A549 (cell line): ENCODE measurements at regions of chr11 and their contacts with region 1.

Region 1: GRCh38 chr11:18115360-18116127 is 9.7 kb upstream of the SAAL1 start:
- DNase-seq: peak; percentile 72 to 75
- ATAC-seq: peak; percentile 91 to 97
- H3K4me3 ChIP-seq: no peak overlapping the region
- H3K27ac ChIP-seq: no peak overlapping the region
- H3K4me1 ChIP-seq: no peaks in the 10 kb centered on the region
- CTCF ChIP-seq: peak; percentile 89
- EP300 ChIP-seq: no peak
- POLR2A ChIP-seq: no peak
- RAD21 ChIP-seq: peak; percentile 83 to 88

Region 2: GRCh38 chr11:18075444-18075843 is 40.1 kb before region 1 on chr11:
- CTCF ChIA-PET with region 1: interaction called, 11 read pairs
- POLR2A ChIA-PET with region 1: no interaction called
- DNase-seq: no peak
- ATAC-seq: no peak
- H3K4me3 ChIP-seq: no peak overlapping the region
- H3K27ac ChIP-seq: no peak overlapping the region
- H3K4me1 ChIP-seq: no peaks in the 10 kb centered on the region
- CTCF ChIP-seq: no peak
- EP300 ChIP-seq: no peak
- POLR2A ChIP-seq: no peak
- RAD21 ChIP-seq: no peak

Region 3: DNA sequence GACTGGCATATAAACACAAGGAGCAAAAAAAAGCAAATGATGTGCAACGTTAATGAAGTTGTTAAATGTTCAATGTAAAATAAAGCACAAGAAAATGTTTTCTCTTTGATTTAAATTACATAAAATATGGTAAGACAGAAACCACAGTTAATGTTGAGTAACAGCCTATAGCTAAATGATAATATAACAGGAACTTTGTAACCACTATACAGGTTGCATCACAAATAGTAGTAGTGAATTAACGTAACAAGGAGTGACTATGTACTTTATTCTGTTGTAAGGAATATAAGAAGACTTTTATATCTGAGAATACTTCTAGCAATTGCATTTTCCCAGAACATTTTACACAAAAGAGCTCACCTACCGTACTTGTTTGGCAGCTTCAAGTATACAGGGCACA is 26.6 kb before region 1 on chr11:
- CTCF ChIA-PET with region 1: interaction called, 19 read pairs
- POLR2A ChIA-PET with region 1: no interaction called
- DNase-seq: no peak
- ATAC-seq: no peak
- H3K4me3 ChIP-seq: no peak overlapping the region
- H3K27ac ChIP-seq: no peak overlapping the region
- H3K4me1 ChIP-seq: 0 out of 3 replicates have a peak, but pooled peaks cover 5% of the 10 kb centered on the region
- CTCF ChIP-seq: no peak
- EP300 ChIP-seq: no peak
- POLR2A ChIP-seq: no peak
- RAD21 ChIP-seq: no peak

Region 4: GRCh38 chr11:18132341-18132740 is 16.8 kb after region 1 on chr11 and contains the start of gene MRGPRX3:
- CTCF ChIA-PET with region 1: interaction called, 15 read pairs
- POLR2A ChIA-PET with region 1: no interaction called
- DNase-seq: no peak
- ATAC-seq: no peak
- H3K4me3 ChIP-seq: no peak within 1 kb of the TSS
- H3K27ac ChIP-seq: no peak within 1 kb of the TSS
- H3K4me1 ChIP-seq: no peaks in the 10 kb centered on the region
- CTCF ChIP-seq: no peak
- EP300 ChIP-seq: no peak
- POLR2A ChIP-seq: no peak
- RAD21 ChIP-seq: no peak
- polyA plus RNA-seq, gene MRGPRX3: 0.08 TPM in 1 of 2 replicates, not detected in the other

Region 5: DNA sequence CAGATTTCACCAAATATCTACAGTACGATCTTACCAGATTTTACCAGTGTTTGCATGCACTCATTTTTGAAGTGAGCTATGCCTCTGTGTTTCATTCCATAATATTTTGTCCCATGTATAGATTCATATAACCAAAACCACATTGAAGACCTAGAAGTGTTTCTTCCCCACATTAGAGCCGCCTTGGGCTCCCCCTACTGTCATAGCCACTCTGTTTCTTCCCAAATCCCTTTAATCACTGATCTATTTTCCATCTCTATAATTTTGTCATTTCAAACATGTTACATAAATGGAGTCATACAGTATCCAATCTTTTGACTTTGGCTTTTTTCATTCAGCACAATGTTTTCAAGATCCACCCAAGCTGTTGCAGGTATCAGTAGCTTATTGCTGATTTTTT is 29.5 kb after region 1 on chr11:
- CTCF ChIA-PET with region 1: interaction called, 11 read pairs
- POLR2A ChIA-PET with region 1: no interaction called
- DNase-seq: peak; percentile 7 to 11
- ATAC-seq: peak; percentile 60 to 62; a peak in 2 of 6 replicates
- H3K4me3 ChIP-seq: no peak overlapping the region
- H3K27ac ChIP-seq: no peak overlapping the region
- H3K4me1 ChIP-seq: no peaks in the 10 kb centered on the region
- CTCF ChIP-seq: peak; percentile 29; the same call in 1 of the 3 replicates
- EP300 ChIP-seq: no peak
- POLR2A ChIP-seq: no peak
- RAD21 ChIP-seq: no peak

Region 6: GRCh38 chr11:18757811-18758210 is 642.3 kb after region 1 on chr11:
- CTCF ChIA-PET with region 1: interaction called, 18 read pairs
- POLR2A ChIA-PET with region 1: no interaction called
- DNase-seq: no peak
- ATAC-seq: no peak
- H3K4me3 ChIP-seq: no peak overlapping the region
- H3K27ac ChIP-seq: no peak overlapping the region
- H3K4me1 ChIP-seq: peaks cover 12% of the 10 kb centered on the region; the same call in 1 of the 3 replicates
- CTCF ChIP-seq: no peak
- EP300 ChIP-seq: no peak
- POLR2A ChIP-seq: no peak
- RAD21 ChIP-seq: no peak

Region 7: DNA sequence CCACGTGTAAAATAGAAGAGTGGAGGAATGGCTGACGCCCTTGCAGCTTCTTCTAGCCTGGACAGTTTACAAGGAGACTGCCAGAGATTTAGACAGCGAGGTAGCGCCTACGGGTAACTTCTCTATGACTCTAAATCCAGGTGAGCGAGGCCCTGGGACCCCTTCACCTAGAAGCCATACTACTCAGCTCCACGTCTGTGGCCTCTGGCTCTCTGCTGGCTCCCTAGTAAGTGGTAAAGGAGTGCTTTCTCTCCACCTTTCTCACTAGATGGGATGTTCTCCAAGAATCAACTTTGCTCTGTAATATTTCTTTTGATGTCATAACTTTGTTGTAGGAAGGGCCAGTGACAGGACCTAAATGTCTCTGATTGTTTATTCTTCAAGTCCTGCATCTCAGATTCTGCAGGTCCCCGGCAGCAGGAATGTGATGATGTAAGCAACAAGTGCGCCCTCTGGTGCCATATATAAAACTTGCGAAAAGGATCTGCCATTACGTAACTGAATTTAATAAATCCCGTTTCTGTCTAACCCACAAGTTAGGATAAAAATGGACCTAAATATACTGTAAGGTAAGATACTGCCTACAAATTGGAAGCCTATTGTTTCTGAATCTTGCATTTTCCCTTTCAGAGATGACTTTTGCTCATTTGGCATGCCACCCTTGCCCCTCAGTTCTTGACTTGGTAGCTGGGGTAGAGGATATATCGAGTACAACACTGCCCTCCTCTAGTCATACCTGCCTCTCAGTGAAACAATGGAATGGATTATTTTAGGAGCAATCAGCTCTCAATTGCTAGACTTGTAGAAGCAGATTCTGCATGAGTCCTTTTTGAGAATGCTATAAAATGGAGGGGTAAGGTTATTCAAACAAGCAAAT is 687.1 kb after region 1 on chr11:
- CTCF ChIA-PET with region 1: interaction called, 17 read pairs
- POLR2A ChIA-PET with region 1: no interaction called
- DNase-seq: peak; percentile 66 to 82
- ATAC-seq: peak; percentile 68 to 83; a peak in 5 of 6 replicates
- H3K4me3 ChIP-seq: no peak overlapping the region
- H3K27ac ChIP-seq: no peak overlapping the region
- H3K4me1 ChIP-seq: no peaks in the 10 kb centered on the region
- CTCF ChIP-seq: peak; percentile 81; the same call in 2 of the 3 replicates
- EP300 ChIP-seq: no peak
- POLR2A ChIP-seq: no peak
- RAD21 ChIP-seq: peak; percentile 65 to 74